Pancreas (tissue), 10 donors: ENCODE measurements at regions of chr17 and their contacts with region 1.

Region 1: GRCh38 chr17:6666077-6666521 is 14.5 kb downstream of the C17orf100 start:
- DNase-seq: peak; percentile 60 to 85 (median 70)
- ATAC-seq: peak; percentile 96 to 100 (median 99)
- H3K4me3 ChIP-seq: no peak overlapping the region
- H3K27ac ChIP-seq: no peak overlapping the region
- H3K4me1 ChIP-seq: peaks cover 0 to 5% (median 0%) of the 10 kb centered on the region in 3 donors
- H3K27me3 ChIP-seq: no peaks in the 10 kb centered on the region
- CTCF ChIP-seq: peak; percentile 65 to 82 (median 67)

Region 2: GRCh38 chr17:6843241-6843880 is 177.3 kb after region 1 on chr17:
- intact Hi-C with region 1: loop called in 1 of 3 experiments (anchors 10 kb)
- DNase-seq: no peak
- ATAC-seq: peak in 3 of 4 donors; percentile 56 to 75 (median 70)
- H3K4me3 ChIP-seq: no peak overlapping the region
- H3K27ac ChIP-seq: no peak overlapping the region
- H3K4me1 ChIP-seq: no peaks in the 10 kb centered on the region
- H3K27me3 ChIP-seq: no peaks in the 10 kb centered on the region
- CTCF ChIP-seq: peak in 3 of 4 donors; percentile 31 to 49 (median 48)